ENCODE measurements at regions of chr1 and their contacts with region 1.

Region 1: GRCh38 chr1:147599362-147600118 is 58.2 kb downstream of the BCL9 start:
- DNase-seq: peak; percentile 97
- ATAC-seq: peak; percentile 79 to 83
- H3K4me3 ChIP-seq: peak overlapping the region; percentile 74 to 97 (median 86)
- H3K27ac ChIP-seq: peak overlapping the region; percentile 88 to 98 (median 96)
- H3K4me1 ChIP-seq: peaks cover 20 to 33% of the 10 kb centered on the region in 2 donors
- H3K27me3 ChIP-seq: no peaks in the 10 kb centered on the region
- CTCF ChIP-seq: no peak
- POLR2A ChIP-seq: peak; percentile 96 to 98

Region 2: DNA sequence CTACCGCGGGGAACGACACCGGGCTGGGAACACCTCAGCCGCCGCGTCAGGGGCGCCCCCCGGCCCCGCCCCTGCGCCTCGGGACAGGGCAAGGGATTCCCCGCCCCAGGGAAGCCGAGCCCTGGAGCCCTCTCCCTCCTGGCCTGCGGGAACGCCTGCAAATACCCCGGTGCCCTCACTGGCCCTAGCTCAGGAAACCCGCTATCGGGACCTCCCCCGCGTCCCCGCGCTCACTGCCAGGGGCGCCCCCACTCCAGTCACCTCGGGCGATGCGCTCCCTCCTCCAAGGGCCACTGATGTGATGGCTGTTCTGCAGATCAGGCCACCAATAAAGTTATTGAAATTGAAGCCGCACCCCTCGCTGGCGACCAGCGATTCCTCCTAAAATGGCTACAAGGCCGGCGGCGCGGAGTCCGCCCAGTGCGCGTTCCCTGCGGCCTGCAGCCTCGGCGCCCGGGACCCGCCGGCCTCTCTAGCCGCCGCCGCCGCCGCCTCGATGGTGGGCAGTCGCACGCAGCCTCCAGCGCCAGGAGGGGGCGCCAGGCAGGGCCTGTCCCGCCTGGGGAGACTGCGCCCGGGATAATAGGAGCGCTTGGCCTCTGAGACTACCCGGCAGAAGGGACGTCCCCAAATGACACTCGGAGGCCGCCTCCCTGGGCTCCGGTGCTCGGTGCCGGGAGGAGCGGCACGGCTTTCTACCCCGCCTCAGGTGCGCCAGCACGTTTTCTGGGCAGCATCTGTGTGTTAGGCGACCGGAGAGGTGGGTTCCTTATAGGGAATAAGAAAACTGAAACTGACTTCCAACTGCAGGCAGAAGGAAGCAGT is 427.2 kb before region 1 on chr1 and contains the start of gene PRKAB2:
- in situ Hi-C with region 1: loop called in 1 of 4 experiments (anchors 25 kb)
- intact Hi-C with region 1: no loop called
- DNase-seq: peak; percentile 93 to 96
- ATAC-seq: peak; percentile 88 to 92
- H3K4me3 ChIP-seq: peak within 1 kb of the TSS; percentile 77 to 97 (median 94)
- H3K27ac ChIP-seq: peak within 1 kb of the TSS; percentile 85 to 97 (median 92)
- H3K4me1 ChIP-seq: peaks cover 35 to 46% of the 10 kb centered on the region in 2 donors
- H3K27me3 ChIP-seq: no peaks in the 10 kb centered on the region
- CTCF ChIP-seq: peak; percentile 86 to 98 (median 96)
- POLR2A ChIP-seq: peak; percentile 73 to 74
- total RNA-seq, gene PRKAB2: 65.2 to 107 (median 80.2) TPM

Region 3: GRCh38 chr1:147242439-147243227 is 356.9 kb before region 1 on chr1 and contains the start of gene CHD1L:
- in situ Hi-C with region 1: no loop called
- intact Hi-C with region 1: loop called (anchors 5 kb)
- DNase-seq: peak; percentile 91 to 95
- ATAC-seq: peak; percentile 89
- H3K4me3 ChIP-seq: peak within 1 kb of the TSS; percentile 81 to 89 (median 84)
- H3K27ac ChIP-seq: peak within 1 kb of the TSS; percentile 93 to 97 (median 95)
- H3K4me1 ChIP-seq: peaks cover 19 to 25% of the 10 kb centered on the region in 2 donors
- H3K27me3 ChIP-seq: no peaks in the 10 kb centered on the region
- CTCF ChIP-seq: peak; percentile 79 to 90 (median 87)
- POLR2A ChIP-seq: peak; percentile 62 to 76
- total RNA-seq, gene CHD1L: 9.0 to 10.3 (median 9.6) TPM

Region 4: GRCh38 chr1:147545133-147545532 is 54.4 kb before region 1 on chr1:
- in situ Hi-C with region 1: loop called in 3 of 4 experiments (anchors 5 to 10 kb)
- intact Hi-C with region 1: loop called (anchors 1 kb)
- DNase-seq: peak; percentile 22 to 56
- ATAC-seq: peak; percentile 4 to 20
- H3K4me3 ChIP-seq: peak overlapping the region in 1 of 4 donors; percentile 2
- H3K27ac ChIP-seq: peak overlapping the region; percentile 62 to 99 (median 94)
- H3K4me1 ChIP-seq: peaks cover 40 to 47% of the 10 kb centered on the region in 2 donors
- H3K27me3 ChIP-seq: no peaks in the 10 kb centered on the region
- CTCF ChIP-seq: no peak
- POLR2A ChIP-seq: no peak

Region 5: DNA sequence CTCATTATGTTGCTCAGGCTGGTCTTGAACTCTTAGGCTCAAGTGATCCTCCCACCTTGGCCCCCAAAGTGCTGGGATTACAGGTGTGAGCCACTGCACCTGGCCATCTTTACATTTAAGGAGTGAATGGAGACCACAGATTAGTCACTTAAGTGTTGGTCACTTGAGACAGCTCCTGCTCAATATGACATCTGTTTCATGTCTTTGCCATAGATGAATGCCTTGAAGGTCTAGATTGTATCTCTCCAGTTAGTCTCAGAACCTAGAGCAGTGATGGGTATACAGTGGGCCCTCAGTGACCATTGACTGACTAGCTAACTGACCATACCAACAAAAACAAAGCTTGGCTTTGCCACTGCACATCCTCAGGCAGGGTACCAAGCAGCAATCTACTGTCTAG is 42.9 kb before region 1 on chr1:
- in situ Hi-C with region 1: no loop called
- intact Hi-C with region 1: no loop called
- DNase-seq: no peak
- ATAC-seq: no peak
- H3K4me3 ChIP-seq: no peak overlapping the region
- H3K27ac ChIP-seq: no peak overlapping the region
- H3K4me1 ChIP-seq: peaks cover 9 to 19% of the 10 kb centered on the region in 2 donors
- H3K27me3 ChIP-seq: no peaks in the 10 kb centered on the region
- CTCF ChIP-seq: no peak
- POLR2A ChIP-seq: no peak

Region 6: GRCh38 chr1:147618077-147618569 is 18.6 kb after region 1 on chr1:
- in situ Hi-C with region 1: no loop called
- intact Hi-C with region 1: loop called (anchors 1 kb)
- DNase-seq: peak in 1 of 2 donors; percentile 62
- ATAC-seq: peak; percentile 89 to 98
- H3K4me3 ChIP-seq: peak overlapping the region in 1 of 4 donors; percentile 14
- H3K27ac ChIP-seq: peak overlapping the region; percentile 81 to 87 (median 82)
- H3K4me1 ChIP-seq: peaks cover 56 to 60% of the 10 kb centered on the region in 2 donors
- H3K27me3 ChIP-seq: no peaks in the 10 kb centered on the region
- CTCF ChIP-seq: no peak
- POLR2A ChIP-seq: no peak

Region 7: GRCh38 chr1:147640553-147641165 is 41.1 kb after region 1 on chr1:
- in situ Hi-C with region 1: no loop called
- intact Hi-C with region 1: loop called (anchors 2 kb)
- DNase-seq: peak; percentile 52 to 78
- ATAC-seq: peak; percentile 92 to 97
- H3K4me3 ChIP-seq: no peak overlapping the region
- H3K27ac ChIP-seq: no peak overlapping the region
- H3K4me1 ChIP-seq: peaks cover 6 to 7% of the 10 kb centered on the region in 2 donors
- H3K27me3 ChIP-seq: no peaks in the 10 kb centered on the region
- CTCF ChIP-seq: peak; percentile 73 to 87 (median 76)
- POLR2A ChIP-seq: no peak

Region 8: DNA sequence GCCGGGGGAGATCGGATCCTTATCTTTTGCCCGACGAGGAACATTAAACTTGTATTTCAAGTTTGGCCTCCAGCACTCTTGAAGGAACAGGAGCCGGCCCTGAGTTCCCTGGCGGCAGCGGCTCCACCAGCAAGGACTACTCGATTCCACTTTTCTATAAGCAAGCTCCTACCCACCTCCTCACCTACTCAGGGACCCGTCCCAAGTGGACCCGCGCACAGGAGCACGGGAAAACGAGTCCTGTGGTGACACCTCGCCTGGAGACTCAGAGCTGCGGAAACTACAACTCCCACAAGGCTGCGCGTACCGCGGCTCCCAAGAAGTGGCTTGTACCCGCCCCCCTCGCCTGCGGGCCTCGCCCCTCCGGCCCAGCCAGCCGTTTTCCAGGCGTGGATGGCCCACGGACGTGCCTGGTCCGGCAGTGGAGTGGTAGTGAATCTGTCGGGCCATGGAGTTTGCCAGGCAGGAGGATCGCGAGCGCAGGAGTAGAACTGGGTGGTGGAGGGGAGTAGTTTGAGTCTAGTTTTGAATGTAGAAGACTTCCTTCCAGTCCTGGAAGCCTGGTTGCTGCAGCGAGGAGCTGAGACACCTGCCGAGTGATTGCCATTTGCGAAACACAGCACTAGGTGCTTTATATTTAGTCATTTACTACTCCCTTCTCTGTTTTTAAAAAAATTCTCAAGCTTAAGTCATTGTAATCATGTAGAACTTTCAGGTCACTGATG is 70.9 kb after region 1 on chr1 and contains the start of gene ACP6:
- in situ Hi-C with region 1: no loop called
- intact Hi-C with region 1: loop called (anchors 5 kb)
- DNase-seq: peak; percentile 92 to 93
- ATAC-seq: peak; percentile 96 to 98
- H3K4me3 ChIP-seq: peak within 1 kb of the TSS; percentile 79 to 89 (median 85)
- H3K27ac ChIP-seq: peak within 1 kb of the TSS; percentile 81 to 88 (median 85)
- H3K4me1 ChIP-seq: peaks cover 19 to 20% of the 10 kb centered on the region in 2 donors
- H3K27me3 ChIP-seq: no peaks in the 10 kb centered on the region
- CTCF ChIP-seq: no peak
- POLR2A ChIP-seq: peak; percentile 69 to 71
- total RNA-seq, gene ACP6: 3.9 to 11.4 (median 9.2) TPM